Activated CD4-positive, alpha-beta memory T cell treated with anti-CD3 and anti-CD28 coated beads for 36 hours (primary cell): ENCODE measurements at regions of chr3 and their contacts with region 1.

Region 1: GRCh38 chr3:129120254-129121004 is 1.2 kb downstream of the RAB43 start:
- DNase-seq: peak; percentile 97
- H3K4me3 Mint-ChIP-seq: peak overlapping the region; percentile 92
- H3K27ac Mint-ChIP-seq: peak overlapping the region; percentile 98
- H3K4me1 Mint-ChIP-seq: peaks cover 43% of the 10 kb centered on the region
- H3K27me3 Mint-ChIP-seq: no peaks in the 10 kb centered on the region

Region 2: DNA sequence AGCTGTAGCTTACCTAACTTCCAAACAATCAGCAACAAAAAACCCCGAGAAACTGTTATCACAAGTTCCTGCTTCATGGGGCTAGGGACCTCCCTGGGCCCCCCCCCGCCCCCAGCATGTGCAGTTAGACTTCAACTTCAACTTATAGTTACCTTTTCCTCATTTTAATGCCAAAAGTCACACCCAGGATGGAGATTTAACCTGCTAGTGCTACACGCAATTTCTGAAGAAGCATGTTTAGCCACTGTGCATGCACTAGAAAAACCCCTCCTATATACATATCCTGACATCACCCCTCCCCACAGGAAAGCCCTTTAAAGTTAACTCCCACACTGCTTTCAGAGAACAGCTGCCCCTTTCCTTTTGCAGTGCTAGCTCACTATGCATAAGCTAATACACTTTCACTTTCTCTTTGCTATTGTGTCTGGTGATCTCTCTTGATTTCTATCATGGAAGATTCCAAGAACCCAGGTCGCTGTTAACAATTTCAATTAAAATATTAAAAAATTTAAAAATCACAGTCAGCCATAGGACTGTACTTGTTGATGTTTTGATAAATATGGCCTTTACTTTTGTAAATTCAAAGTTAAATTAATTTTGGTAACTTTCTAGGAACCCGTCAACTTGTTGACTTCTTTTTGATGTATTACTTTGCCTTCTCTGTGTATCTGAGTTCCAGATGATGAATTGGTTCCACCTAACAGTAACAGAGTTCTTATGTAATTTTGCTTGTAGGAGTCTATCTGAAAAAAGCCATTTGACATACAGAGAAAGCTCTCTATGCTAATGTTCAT is 316.2 kb before region 1 on chr3:
- CTCF ChIA-PET with region 1: no interaction called
- POLR2A ChIA-PET with region 1: no interaction called
- intact Hi-C with region 1: loop called (anchors 5 kb)
- DNase-seq: peak; percentile 76
- H3K4me3 Mint-ChIP-seq: peak overlapping the region; percentile 49
- H3K27ac Mint-ChIP-seq: peak overlapping the region; percentile 94
- H3K4me1 Mint-ChIP-seq: peaks cover 78% of the 10 kb centered on the region
- H3K27me3 Mint-ChIP-seq: no peaks in the 10 kb centered on the region

Region 3: GRCh38 chr3:129026728-129027543 is 93.5 kb before region 1 on chr3:
- CTCF ChIA-PET with region 1: interaction called, 8 read pairs
- POLR2A ChIA-PET with region 1: interaction called, 3 read pairs
- intact Hi-C with region 1: loop called (anchors 2 kb)
- DNase-seq: peak; percentile 96
- H3K4me3 Mint-ChIP-seq: peak overlapping the region; percentile 73
- H3K27ac Mint-ChIP-seq: peak overlapping the region; percentile 83
- H3K4me1 Mint-ChIP-seq: peaks cover 9% of the 10 kb centered on the region
- H3K27me3 Mint-ChIP-seq: no peaks in the 10 kb centered on the region

Region 4: DNA sequence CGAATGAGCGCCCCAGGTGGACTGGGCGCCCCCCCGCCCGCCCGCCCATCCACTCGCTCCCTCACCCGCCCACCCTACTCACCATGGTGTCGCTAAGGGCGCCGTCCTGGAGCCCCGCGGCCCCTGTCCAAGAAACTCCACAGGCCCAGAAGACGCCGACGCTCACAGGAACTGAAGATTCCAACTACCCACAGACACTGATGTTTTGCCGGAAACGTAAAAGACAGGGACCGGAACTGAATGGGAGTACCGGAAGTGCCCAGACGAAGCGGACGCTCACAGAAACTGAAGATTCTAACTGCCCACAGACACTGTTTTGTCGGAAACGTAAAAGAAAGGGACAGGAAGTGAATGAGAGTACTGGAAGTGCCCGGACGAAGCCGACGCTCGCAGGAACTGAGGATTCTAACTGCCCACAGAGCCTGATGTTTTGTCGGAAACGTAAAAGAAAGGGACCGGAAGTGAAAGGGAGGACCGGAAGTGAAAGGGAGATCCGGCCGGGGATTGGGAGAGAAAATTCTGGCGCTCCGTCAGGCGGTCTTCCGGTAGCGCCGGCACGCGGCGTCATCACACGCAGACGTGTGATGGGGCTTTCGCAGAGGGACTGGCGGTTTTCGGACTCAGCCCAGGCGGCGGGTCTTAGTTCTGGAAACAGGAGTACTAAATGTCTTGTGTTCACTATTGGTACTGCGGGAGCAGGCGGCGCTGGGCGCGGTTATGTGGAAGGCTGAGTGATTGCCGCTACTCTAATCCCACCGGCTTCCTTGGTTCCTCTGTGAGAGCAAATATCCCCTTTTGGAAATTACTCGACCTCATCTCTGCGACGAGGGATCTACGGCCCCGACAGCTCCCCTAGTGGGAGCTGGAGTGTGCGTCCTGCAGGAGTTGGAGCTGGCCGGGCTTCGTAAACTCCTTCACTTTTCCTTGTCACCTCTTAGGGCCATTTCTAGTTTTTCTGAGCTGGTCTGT is 40.7 kb after region 1 on chr3 and contains the start of gene ISY1:
- CTCF ChIA-PET with region 1: interaction called, 17 read pairs
- POLR2A ChIA-PET with region 1: interaction called, 28 read pairs
- intact Hi-C with region 1: loop called (anchors 1 kb)
- DNase-seq: peak; percentile 93
- H3K4me3 Mint-ChIP-seq: peak within 1 kb of the TSS; percentile 98
- H3K27ac Mint-ChIP-seq: peak within 1 kb of the TSS; percentile 100
- H3K4me1 Mint-ChIP-seq: peaks cover 31% of the 10 kb centered on the region
- H3K27me3 Mint-ChIP-seq: no peaks in the 10 kb centered on the region
- total RNA-seq, gene ISY1: 60.7 to 61.7 TPM

Region 5: DNA sequence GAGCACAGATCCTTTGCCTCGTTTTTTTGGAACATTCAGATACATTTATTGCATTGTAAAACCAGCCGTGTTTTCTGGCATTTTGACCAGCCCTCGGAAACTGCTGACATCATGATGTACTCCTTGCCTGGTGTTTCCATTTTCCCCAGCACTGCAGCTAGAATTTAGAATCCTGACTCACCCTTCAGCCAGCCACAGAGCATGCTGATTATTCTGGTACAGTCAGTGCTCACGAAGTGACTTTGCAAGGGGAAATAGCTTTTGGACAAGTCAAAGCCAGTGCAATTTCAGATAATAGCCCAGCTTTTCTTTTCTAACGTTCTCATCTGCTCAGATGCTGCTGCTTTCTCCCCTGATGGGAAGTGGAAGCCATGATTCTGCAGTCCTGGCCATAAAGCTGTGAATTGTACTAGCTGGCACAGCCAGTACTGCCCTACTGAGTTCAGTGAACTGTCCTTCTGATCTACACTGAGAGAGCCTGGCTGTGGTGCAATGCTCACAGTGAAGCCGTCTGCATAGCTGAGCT is 75.4 kb after region 1 on chr3:
- CTCF ChIA-PET with region 1: no interaction called
- POLR2A ChIA-PET with region 1: no interaction called
- intact Hi-C with region 1: no loop called
- DNase-seq: peak; percentile 37
- H3K4me3 Mint-ChIP-seq: no peak overlapping the region
- H3K27ac Mint-ChIP-seq: no peak overlapping the region
- H3K4me1 Mint-ChIP-seq: peaks cover 7% of the 10 kb centered on the region
- H3K27me3 Mint-ChIP-seq: no peaks in the 10 kb centered on the region

Region 6: GRCh38 chr3:129278439-129278970 is 158.1 kb after region 1 on chr3 and contains the start of gene HMCES:
- CTCF ChIA-PET with region 1: no interaction called
- POLR2A ChIA-PET with region 1: no interaction called
- intact Hi-C with region 1: loop called (anchors 2 kb)
- DNase-seq: peak; percentile 97
- H3K4me3 Mint-ChIP-seq: peak within 1 kb of the TSS; percentile 89
- H3K27ac Mint-ChIP-seq: peak within 1 kb of the TSS; percentile 90
- H3K4me1 Mint-ChIP-seq: peaks cover 52% of the 10 kb centered on the region
- H3K27me3 Mint-ChIP-seq: no peaks in the 10 kb centered on the region
- total RNA-seq, gene HMCES: 58.4 to 61.5 TPM